ENCODE measurements at regions of chr4 and their contacts with region 1.

Region 1: GRCh38 chr4:186725469-186726425 is 2.1 kb upstream of the FAT1 start:
- DNase-seq: peak; percentile 64
- ATAC-seq: peak; percentile 58
- H3K4me3 ChIP-seq: peak overlapping the region; percentile 91 to 97
- H3K27ac ChIP-seq: peak overlapping the region; percentile 96
- H3K4me1 ChIP-seq: peaks cover 38 to 62% of the 10 kb centered on the region in 2 experiments
- H3K27me3 ChIP-seq: no peaks in the 10 kb centered on the region
- CTCF ChIP-seq: peak in 2 of 3 experiments; percentile 68 to 75; a peak in 4 of 6 replicates
- POLR2A ChIP-seq: no peak
- RAD21 ChIP-seq: no peak

Region 2: DNA sequence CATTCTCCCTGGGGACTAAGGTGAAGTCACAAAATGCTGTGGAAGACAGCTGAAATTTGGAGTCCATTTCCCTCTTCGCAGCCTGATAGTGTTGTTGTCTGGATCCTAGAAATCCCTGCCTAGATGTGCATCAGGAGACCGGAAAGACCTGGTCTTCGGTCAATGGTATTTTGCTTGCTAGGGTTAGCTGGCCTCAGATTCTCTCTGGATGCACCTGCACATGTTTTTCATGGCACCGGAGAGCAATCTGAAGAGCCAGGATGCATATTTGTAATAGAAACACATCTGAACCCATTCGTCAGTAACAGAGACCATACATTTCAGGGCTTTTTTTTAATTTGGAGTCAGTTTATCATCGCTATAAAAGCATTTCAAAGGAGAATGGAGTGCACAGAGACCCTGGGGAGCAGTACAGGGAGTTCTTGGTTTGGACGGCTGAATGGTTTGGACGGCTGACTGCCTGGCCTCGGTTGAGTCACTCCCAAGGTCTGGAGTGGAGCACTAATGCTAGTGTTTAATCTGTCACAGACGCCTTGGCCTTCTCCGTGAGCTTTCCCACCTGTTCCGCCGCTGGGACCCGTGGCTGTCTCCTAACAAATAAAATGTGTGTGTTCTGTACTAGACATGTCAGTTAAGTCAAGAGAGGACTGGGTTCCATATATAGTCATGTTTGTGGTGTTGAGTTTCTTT is 1183.0 kb before region 1 on chr4:
- CTCF ChIA-PET with region 1: no interaction called
- POLR2A ChIA-PET with region 1: no interaction called
- RAD21 ChIA-PET with region 1: no interaction called
- intact Hi-C with region 1: no loop called
- DNase-seq: no peak
- ATAC-seq: no peak
- H3K4me3 ChIP-seq: no peak overlapping the region
- H3K27ac ChIP-seq: no peak overlapping the region
- H3K4me1 ChIP-seq: no peaks in the 10 kb centered on the region
- H3K27me3 ChIP-seq: no peaks in the 10 kb centered on the region
- CTCF ChIP-seq: no peak
- POLR2A ChIP-seq: no peak
- RAD21 ChIP-seq: no peak

Region 3: GRCh38 chr4:186808635-186809018 is 82.9 kb after region 1 on chr4:
- CTCF ChIA-PET with region 1: no interaction called
- POLR2A ChIA-PET with region 1: interaction called, 8 read pairs
- RAD21 ChIA-PET with region 1: no interaction called
- intact Hi-C with region 1: loop called (anchors 5 kb)
- DNase-seq: peak; percentile 74
- ATAC-seq: peak; percentile 73
- H3K4me3 ChIP-seq: peak overlapping the region; percentile 20 to 48
- H3K27ac ChIP-seq: peak overlapping the region; percentile 76
- H3K4me1 ChIP-seq: peaks cover 78 to 100% of the 10 kb centered on the region in 2 experiments
- H3K27me3 ChIP-seq: no peaks in the 10 kb centered on the region
- CTCF ChIP-seq: no peak
- POLR2A ChIP-seq: no peak
- RAD21 ChIP-seq: no peak

Region 4: DNA sequence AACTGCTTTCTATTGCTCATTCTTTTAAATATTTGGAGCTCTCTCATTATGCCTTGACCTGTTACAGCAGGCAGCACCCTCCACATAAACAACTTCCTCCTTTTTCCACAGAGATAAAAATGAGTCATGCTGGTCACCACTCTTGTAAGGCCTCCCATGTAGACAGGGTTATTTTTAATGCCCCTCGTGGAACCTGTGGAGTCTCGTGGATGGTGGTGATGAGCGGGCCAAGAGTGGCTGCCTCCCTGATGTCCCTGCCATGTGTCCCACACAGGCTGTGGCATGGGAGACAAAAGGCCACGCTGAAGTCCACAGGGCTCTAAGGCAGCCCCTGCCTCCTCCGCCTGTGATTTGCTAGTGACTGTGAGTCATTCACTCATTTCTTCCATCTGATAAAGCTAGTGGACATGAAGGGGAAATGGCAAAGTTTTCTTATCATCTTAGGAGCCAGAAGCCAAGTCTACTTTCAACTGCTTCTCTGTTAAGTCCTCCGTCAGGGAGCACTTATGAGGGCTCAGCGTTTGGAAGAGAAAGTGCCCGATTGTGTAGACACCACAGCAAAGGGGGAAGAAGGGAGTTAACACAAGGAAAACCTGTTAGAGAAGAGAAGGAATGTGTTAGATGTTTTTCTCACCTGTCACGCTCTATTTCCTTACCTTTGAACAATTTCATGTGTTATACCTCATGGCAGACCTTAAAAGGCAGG is 119.5 kb after region 1 on chr4:
- CTCF ChIA-PET with region 1: no interaction called
- POLR2A ChIA-PET with region 1: interaction called, 5 read pairs
- RAD21 ChIA-PET with region 1: no interaction called
- intact Hi-C with region 1: loop called (anchors 1 kb)
- DNase-seq: peak; percentile 92
- ATAC-seq: peak; percentile 77
- H3K4me3 ChIP-seq: peak overlapping the region; percentile 4 to 44; a peak in 3 of 4 replicates
- H3K27ac ChIP-seq: peak overlapping the region; percentile 98
- H3K4me1 ChIP-seq: peaks cover 41 to 58% of the 10 kb centered on the region in 2 experiments
- H3K27me3 ChIP-seq: no peaks in the 10 kb centered on the region
- CTCF ChIP-seq: no peak
- POLR2A ChIP-seq: peak; percentile 20
- RAD21 ChIP-seq: no peak

Region 5: GRCh38 chr4:186946682-186947294 is 221.0 kb after region 1 on chr4:
- CTCF ChIA-PET with region 1: interaction called, 3 read pairs
- POLR2A ChIA-PET with region 1: no interaction called
- RAD21 ChIA-PET with region 1: no interaction called
- intact Hi-C with region 1: loop called (anchors 1 kb)
- DNase-seq: peak; percentile 79
- ATAC-seq: peak; percentile 98
- H3K4me3 ChIP-seq: no peak overlapping the region
- H3K27ac ChIP-seq: peak overlapping the region; percentile 31
- H3K4me1 ChIP-seq: peaks cover 24 to 68% of the 10 kb centered on the region in 2 experiments
- H3K27me3 ChIP-seq: no peaks in the 10 kb centered on the region
- CTCF ChIP-seq: peak; percentile 82 to 89 (median 82); a peak in 5 of 6 replicates
- POLR2A ChIP-seq: no peak
- RAD21 ChIP-seq: peak; percentile 89

Region 6: GRCh38 chr4:187606581-187606980 is 880.8 kb after region 1 on chr4:
- CTCF ChIA-PET with region 1: no interaction called
- POLR2A ChIA-PET with region 1: no interaction called
- RAD21 ChIA-PET with region 1: no interaction called
- intact Hi-C with region 1: loop called (anchors 5 kb)
- DNase-seq: peak; percentile 54
- ATAC-seq: peak; percentile 87
- H3K4me3 ChIP-seq: no peak overlapping the region
- H3K27ac ChIP-seq: no peak overlapping the region
- H3K4me1 ChIP-seq: peaks cover 11 to 28% of the 10 kb centered on the region in 2 experiments
- H3K27me3 ChIP-seq: no peaks in the 10 kb centered on the region
- CTCF ChIP-seq: peak; percentile 74 to 95 (median 84)
- POLR2A ChIP-seq: no peak
- RAD21 ChIP-seq: peak; percentile 90